BJ (cell line): ENCODE measurements at regions of chr10 and their contacts with region 1.

Region 1: DNA sequence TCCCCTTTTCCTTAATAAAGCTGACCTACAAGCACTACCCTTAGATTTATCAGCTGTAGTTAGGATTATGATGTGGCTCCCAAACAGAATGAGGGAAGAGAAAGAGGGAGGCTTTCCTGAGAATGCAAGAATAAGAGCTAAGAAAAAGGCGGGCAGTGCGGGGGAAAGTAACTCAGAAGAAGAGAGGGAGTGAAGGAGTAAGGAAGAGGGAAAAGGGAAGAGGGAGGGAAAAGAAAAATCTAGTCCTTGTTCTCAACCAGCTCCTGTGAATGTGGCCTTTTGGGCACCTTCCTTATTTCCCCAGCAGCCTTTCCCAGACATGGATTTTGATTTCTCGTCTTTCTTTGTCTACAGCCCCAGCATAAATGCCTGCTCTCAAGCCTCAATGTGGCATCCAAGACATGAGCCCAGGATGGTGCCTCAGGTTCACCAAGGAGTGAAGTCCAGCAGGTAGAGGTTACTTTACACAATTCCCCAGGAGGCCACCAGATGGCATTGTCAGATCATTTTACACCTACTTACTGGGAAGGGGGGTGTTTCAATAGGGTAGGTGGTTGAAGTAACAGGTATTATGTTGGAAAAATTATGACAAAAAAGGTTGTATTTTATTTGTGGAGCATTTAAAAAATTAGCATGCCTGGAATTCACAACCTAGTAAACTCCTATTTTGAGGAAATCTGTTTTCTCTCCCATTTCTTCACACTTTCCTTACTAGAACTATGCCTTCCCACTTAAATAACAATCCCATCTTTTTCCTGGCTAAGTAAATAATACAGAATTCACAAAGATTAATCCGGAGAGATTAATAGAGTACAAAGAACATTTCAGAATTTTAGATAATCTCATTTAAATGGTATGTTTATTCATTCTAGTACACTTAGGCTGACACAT is 106.5 kb downstream of the HTR7 start:
- DNase-seq: no peak
- H3K4me3 ChIP-seq: no peak overlapping the region
- H3K27me3 ChIP-seq: peaks cover 2% of the 10 kb centered on the region; the same call in 1 of the 2 replicates
- CTCF ChIP-seq: peak; percentile 75

Region 2: DNA sequence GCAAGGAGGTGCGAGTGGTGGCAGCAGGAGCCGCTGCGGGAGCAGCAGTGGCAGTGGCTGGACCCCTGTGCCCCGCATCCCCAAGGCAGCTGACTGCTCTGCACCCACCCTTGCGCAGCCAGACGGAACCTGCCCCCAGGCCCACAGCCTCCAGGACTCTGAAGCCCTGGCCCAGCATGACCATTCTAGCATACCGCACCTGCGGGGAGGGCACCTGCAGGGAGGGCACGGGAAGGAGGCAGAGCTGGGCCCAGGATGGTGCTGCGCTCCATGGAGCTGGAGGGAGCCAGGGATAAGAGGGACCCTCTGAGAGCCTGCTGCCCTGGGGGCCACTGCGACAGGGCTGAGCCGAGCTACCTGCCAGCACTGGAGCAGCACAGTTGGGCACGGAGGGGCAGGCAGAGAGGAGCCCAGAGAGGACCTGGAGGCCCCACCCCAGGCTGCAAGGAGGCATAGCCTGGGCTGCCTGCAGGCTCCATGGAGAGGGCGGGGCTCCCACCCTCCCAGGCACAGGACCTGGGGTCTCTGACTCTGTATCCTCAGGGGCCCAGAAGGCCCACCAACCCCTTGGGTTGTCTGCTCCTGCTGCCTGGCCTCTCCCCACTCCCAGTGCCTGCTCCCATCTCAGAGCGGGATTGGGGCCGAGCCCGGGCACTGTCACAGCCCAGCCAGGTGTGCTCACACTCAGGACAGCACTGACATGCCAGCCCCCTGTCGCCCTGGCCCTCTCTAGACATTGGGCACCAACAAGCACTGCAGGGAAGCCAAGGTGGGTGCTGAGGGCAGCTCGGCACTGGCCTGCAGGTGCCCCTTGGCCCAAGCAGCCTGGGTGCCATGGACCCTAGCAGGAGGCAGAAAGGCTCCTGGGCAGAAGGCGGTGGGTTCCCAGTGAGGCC is 18.8 kb after region 1 on chr10:
- CTCF ChIA-PET with region 1: interaction called, 10 read pairs
- POLR2A ChIA-PET with region 1: no interaction called
- DNase-seq: no peak
- H3K4me3 ChIP-seq: no peak overlapping the region
- H3K27me3 ChIP-seq: 0 out of 2 replicates have a peak, but pooled peaks cover 1% of the 10 kb centered on the region
- CTCF ChIP-seq: no peak

Region 3: DNA sequence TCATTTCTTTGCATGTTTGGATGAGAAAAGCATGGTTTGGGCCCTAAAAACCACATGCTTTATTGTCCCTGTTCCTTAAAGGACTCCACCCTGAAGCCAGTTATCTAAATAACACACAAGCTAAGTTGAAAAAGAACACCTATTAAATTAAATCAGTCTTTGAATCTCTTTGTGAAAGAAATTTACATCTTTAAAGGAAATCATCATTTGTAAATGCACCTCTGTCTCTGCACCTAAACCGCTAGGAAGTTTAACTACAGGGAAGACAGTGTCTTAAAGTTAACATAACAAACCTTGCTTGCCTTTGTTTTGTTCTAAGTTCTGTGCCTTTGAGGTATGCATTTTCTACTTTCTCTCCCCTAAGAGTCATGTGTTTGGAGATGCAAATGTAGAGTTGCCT is 53.9 kb after region 1 on chr10:
- CTCF ChIA-PET with region 1: no interaction called
- POLR2A ChIA-PET with region 1: no interaction called
- DNase-seq: no peak
- H3K4me3 ChIP-seq: no peak overlapping the region
- H3K27me3 ChIP-seq: no peaks in the 10 kb centered on the region
- CTCF ChIP-seq: no peak

Region 4: GRCh38 chr10:90822508-90822907 is 71.2 kb after region 1 on chr10:
- CTCF ChIA-PET with region 1: no interaction called
- POLR2A ChIA-PET with region 1: no interaction called
- DNase-seq: no peak
- H3K4me3 ChIP-seq: no peak overlapping the region
- H3K27me3 ChIP-seq: no peaks in the 10 kb centered on the region
- CTCF ChIP-seq: no peak

Region 5: GRCh38 chr10:90862908-90863514 is 111.7 kb after region 1 on chr10:
- CTCF ChIA-PET with region 1: interaction called, 29 read pairs
- POLR2A ChIA-PET with region 1: no interaction called
- DNase-seq: no peak
- H3K4me3 ChIP-seq: no peak overlapping the region
- H3K27me3 ChIP-seq: peaks cover 9% of the 10 kb centered on the region
- CTCF ChIP-seq: peak; percentile 80

Region 6: GRCh38 chr10:90912174-90912573 is 160.8 kb after region 1 on chr10:
- CTCF ChIA-PET with region 1: no interaction called
- POLR2A ChIA-PET with region 1: no interaction called
- DNase-seq: no peak
- H3K4me3 ChIP-seq: no peak overlapping the region
- H3K27me3 ChIP-seq: no peaks in the 10 kb centered on the region
- CTCF ChIP-seq: no peak